ENCODE measurements at regions of chr1 and their contacts with region 1.

Region 1: GRCh38 chr1:35715568-35716002 is 3.1 kb downstream of the C1orf216 start:
- DNase-seq: peak; percentile 61 to 77 (median 70)
- ATAC-seq: peak; percentile 46 to 64 (median 58)
- H3K4me3 ChIP-seq: peak overlapping the region in 3 of 12 donors; percentile 7 to 19 (median 12)
- H3K27ac ChIP-seq: no peak overlapping the region
- H3K4me1 ChIP-seq: peaks cover 0 to 38% (median 19%) of the 10 kb centered on the region in 12 donors
- H3K27me3 ChIP-seq: no peaks in the 10 kb centered on the region
- CTCF ChIP-seq: peak; percentile 64 to 91 (median 80)
- POLR2A ChIP-seq: no peak

Region 2: DNA sequence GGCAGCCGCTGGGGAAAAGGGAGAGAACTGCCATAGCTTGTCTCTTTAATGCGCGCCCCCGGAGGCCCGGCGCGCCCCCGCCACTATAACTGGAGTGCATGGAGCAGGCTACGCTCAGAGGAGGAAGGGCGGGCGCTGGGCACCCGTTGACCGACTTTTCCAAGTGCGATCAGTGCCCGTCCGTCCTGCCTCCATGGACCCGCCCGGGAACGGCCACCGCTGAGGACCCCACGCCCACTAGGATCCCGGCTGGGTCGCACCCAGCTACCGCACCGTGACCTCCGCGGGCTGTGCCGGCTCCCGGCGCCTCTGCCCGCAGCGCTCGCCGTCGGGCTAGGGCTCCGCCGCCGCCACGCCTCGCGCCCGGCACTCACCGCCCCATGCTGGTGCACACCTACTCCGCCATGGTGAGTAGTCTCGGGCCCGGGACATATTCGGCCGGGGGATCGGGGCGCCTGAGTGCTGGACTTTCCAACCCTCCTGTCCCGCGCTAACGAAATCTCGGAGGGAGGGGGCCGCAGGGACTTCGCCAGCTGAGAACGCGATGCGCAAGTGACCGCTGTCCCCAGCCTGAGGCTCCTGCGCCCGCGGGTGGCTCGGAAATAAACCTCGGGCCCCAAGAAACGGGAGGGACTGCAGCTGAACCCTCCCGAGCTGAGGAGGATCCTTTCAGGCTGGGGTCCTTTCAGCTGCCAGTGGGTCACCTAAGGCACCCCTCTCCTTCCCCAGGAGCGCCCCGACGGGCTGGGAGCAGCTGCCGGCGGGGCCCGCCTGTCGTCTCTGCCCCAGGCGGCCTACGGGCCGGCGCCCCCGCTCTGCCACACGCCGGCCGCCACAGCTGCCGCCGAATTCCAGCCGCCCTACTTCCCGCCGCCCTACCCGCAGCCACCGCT is 142.1 kb before region 1 on chr1 and contains the start of gene TFAP2E:
- intact Hi-C with region 1: loop called in 2 of 10 experiments (anchors 5 kb)
- DNase-seq: peak in 1 of 5 donors; percentile 28
- ATAC-seq: peak in 3 of 4 donors; percentile 23 to 45 (median 38)
- H3K4me3 ChIP-seq: peak within 1 kb of the TSS; percentile 17 to 58 (median 44)
- H3K27ac ChIP-seq: no peak within 1 kb of the TSS
- H3K4me1 ChIP-seq: peaks cover 6 to 45% (median 18%) of the 10 kb centered on the region in 12 donors
- H3K27me3 ChIP-seq: peaks cover 27 to 90% (median 53%) of the 10 kb centered on the region in 9 donors
- CTCF ChIP-seq: no peak
- POLR2A ChIP-seq: no peak
- total RNA-seq, gene TFAP2E: 0.12 to 0.57 (median 0.41) TPM in 6 of 9 donors, not detected in the others

Region 3: DNA sequence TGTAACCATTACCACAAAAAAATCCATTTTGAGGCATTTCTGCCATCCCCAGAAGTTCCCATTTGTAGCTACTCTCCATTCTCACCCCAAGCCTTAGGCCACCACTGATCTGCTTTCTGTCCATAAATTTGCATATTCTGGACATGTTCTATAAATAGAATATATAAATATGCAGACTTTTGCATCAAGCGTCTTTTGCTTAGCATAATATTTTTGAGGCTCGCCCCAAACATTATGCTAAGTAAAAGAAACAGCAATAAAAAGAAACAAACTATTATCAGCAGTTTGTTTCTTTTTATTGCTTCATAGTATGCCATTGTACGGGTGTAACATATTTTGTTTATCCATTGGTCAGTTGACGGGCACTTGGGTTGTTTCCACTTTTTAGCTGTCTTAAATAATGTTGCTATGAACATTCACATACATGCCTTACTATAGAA is 134.6 kb before region 1 on chr1:
- intact Hi-C with region 1: loop called in 1 of 10 experiments (anchors 5 kb)
- DNase-seq: no peak
- ATAC-seq: no peak
- H3K4me3 ChIP-seq: no peak overlapping the region
- H3K27ac ChIP-seq: no peak overlapping the region
- H3K4me1 ChIP-seq: peaks cover 0 to 24% (median 9%) of the 10 kb centered on the region in 12 donors
- H3K27me3 ChIP-seq: peaks cover 12 to 32% (median 15%) of the 10 kb centered on the region in 9 donors
- CTCF ChIP-seq: no peak
- POLR2A ChIP-seq: no peak

Region 4: GRCh38 chr1:35641233-35641866 is 74.2 kb before region 1 on chr1 and contains the start of gene PSMB2:
- intact Hi-C with region 1: loop called in 5 of 10 experiments (anchors 2 to 10 kb)
- DNase-seq: peak; percentile 94 to 97 (median 95)
- ATAC-seq: peak; percentile 96 to 98 (median 98)
- H3K4me3 ChIP-seq: peak within 1 kb of the TSS; percentile 69 to 96 (median 82)
- H3K27ac ChIP-seq: peak within 1 kb of the TSS; percentile 69 to 95 (median 88)
- H3K4me1 ChIP-seq: peaks cover 0 to 50% (median 39%) of the 10 kb centered on the region in 12 donors
- H3K27me3 ChIP-seq: peaks cover 0 to 16% (median 0%) of the 10 kb centered on the region in 9 donors
- CTCF ChIP-seq: peak in 1 of 12 donors; percentile 8
- POLR2A ChIP-seq: peak in 1 of 2 donors; percentile 61
- total RNA-seq, gene PSMB2: 36.3 to 60.0 (median 41.7) TPM

Region 5: GRCh38 chr1:35864813-35865212 is 149.2 kb after region 1 on chr1:
- intact Hi-C with region 1: no loop called
- DNase-seq: no peak
- ATAC-seq: peak in 1 of 4 donors; percentile 54
- H3K4me3 ChIP-seq: no peak overlapping the region
- H3K27ac ChIP-seq: peak overlapping the region in 1 of 12 donors; percentile 76
- H3K4me1 ChIP-seq: peaks cover 0 to 47% (median 6%) of the 10 kb centered on the region in 12 donors
- H3K27me3 ChIP-seq: no peaks in the 10 kb centered on the region
- CTCF ChIP-seq: no peak
- POLR2A ChIP-seq: no peak